ENCODE measurements at regions of chr10 and their contacts with region 1.

Region 1: GRCh38 chr10:124539935-124540641 is 78.5 kb downstream of the LHPP start:
- DNase-seq: peak; percentile 86
- ATAC-seq: peak; percentile 93

Region 2: DNA sequence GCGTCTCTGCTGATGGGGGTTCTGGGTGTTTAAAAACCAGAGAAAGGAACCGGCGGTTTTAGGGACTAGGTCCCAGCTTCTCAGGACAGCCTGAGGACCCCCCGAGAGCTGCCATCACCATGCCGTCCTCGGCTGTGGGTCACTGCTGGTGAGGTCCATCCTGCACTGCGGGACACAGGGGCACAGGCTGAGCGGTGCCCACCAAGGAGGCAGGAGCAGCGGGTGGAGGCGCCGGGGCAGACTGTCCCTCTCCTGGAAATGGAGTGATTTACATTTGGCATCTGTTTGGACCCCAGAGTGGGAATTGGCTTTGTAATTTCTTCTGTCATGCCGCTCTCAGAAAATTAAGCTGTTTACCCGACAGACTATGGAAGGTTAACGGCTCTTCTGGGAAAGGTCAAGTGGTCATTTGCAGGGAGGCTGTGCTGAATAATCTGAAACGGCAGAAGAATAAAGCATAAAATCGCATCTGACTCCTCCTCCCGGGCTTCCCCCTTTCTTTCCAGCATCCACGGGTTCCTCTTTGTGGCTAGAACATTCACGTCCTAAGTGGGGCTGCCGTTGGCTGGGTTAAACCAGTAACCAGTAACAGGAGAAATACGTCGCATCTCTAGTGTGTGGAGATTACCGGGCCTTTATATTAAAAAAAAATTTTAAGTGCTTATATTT is 46.7 kb before region 1 on chr10:
- intact Hi-C with region 1: no loop called
- DNase-seq: no peak
- ATAC-seq: no peak

Region 3: DNA sequence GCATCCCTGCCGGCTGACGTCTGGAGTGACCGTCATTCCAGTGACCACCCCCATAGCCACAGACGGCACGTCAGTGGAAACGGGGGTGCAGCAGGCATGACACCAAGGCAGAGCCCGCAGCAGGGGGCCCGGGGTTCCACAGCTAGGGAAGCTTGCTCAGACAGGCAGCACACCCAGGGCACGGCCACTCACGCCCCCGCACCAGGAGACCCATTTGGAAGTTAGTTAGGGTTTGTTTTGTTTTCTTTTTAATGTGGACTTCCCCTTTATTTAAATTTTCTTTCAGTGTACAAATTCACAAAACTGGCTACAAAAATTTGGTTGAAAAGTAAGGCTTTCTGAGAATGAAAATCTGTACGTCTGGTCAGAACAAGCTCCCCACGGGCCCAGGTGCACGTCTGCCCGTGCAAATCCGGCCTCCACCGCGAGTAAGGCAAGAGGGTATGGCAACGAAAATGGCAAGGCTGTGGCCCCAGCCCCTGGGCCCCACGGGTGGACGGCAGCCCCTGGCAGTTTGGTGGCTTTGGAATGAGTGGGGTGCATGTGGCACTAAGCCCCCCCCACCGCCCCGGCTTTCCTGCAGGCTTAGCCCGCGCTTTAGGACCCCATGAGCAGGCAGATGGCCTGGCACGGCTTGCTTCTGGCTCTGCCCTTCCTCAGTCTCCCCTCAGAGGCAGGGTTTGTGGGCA is 79.9 kb after region 1 on chr10:
- intact Hi-C with region 1: loop called (anchors 5 kb)
- DNase-seq: no peak
- ATAC-seq: no peak

Region 4: DNA sequence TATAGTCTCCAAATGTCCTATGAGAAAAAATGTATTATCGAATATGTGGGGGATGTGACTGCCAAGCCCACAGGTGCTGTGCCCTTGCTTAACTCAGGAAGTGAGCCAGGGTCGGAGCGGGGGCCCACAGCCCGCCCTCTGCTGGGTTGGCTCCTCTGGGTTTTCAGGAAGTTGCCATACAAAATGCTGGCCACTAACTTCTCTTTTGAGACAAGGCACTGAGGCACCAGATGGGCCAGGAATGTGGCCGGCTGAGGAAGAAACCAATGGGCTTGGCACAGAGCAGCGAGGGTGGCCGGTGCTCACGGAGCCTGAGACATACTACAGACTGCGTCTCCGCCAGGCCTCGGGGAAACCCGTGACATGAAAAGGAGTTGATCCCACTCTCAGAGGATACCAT is 145.2 kb after region 1 on chr10:
- intact Hi-C with region 1: no loop called
- DNase-seq: peak; percentile 77
- ATAC-seq: peak; percentile 47

Region 5: GRCh38 chr10:124732931-124733570 is 193.0 kb after region 1 on chr10:
- intact Hi-C with region 1: no loop called
- DNase-seq: peak; percentile 72
- ATAC-seq: peak; percentile 59